A673 (cell line): ENCODE measurements at regions of chr11 and their contacts with region 1.

Region 1: DNA sequence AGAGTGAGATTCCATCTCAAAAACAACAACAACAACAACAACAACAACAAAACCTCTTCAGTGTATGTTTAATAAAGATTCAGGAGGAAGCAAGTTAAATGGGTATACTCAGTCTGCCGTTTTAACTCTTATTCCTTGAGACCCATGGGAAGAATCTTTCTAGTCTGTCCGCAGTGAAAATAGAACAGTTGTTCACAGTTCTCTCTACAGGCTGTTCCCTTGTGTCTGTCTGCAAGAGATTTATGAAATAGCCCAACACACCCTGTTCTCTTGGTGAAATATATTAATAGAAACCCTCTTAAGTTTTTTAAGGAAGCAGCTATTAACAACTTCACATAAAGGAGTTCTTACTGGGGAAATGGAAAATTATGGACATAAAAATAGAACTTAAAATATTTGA is 682.2 kb upstream of the RAG2 start:
- DNase-seq: peak; percentile 45
- H3K4me3 ChIP-seq: no peak overlapping the region
- H3K27ac ChIP-seq: peak overlapping the region; percentile 100
- H3K4me1 ChIP-seq: peaks cover 61% of the 10 kb centered on the region
- H3K27me3 ChIP-seq: no peaks in the 10 kb centered on the region
- CTCF ChIP-seq: no peak

Region 2: DNA sequence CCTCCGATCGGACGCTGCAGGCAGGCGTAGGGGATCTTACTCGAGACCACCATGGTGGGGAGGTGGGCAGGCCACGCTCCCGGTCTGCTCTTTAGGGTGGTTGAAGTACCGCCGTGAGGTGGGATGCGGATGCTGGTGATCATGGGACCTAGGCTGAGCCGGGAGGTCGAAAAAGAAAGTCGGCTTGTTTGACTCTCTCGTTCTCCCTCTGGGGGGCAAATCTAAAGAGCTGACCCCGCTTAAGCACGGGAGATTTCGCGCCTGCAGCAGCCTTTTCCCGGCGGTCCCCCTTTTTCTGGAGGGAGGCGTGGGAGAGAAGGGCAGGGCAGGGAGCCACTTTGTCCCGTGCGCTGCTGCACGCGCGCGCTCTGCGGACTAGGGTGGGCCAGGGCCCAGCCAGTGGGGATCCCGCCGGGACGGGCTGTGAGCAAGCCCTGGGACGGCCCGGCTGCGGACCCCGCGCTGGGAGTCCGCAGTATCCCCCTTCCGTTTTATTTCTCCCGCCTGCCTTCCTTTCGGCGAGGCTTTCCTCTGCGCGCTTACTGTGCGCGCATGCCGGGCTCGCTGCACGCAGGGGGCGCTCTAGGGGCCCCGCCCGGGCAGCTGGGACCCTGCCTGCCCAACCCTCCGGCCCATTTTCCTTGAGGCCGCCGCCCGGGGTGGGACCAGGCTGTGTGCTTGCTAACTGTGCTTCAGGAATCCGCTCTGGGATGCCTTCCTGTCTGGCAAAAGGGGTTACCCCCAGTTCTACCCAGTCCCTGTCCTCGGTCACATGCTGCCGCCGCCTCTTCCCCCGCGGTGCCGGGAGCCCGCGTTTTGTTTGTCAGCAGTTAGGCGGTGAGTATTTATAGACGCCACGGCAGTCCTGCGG is 903.1 kb before region 1 on chr11:
- CTCF ChIA-PET with region 1: no interaction called
- POLR2A ChIA-PET with region 1: no interaction called
- intact Hi-C with region 1: loop called (anchors 2 kb)
- DNase-seq: peak; percentile 91
- H3K4me3 ChIP-seq: peak overlapping the region; percentile 57
- H3K27ac ChIP-seq: peak overlapping the region; percentile 47
- H3K4me1 ChIP-seq: peaks cover 72% of the 10 kb centered on the region
- H3K27me3 ChIP-seq: no peaks in the 10 kb centered on the region
- CTCF ChIP-seq: peak; percentile 99

Region 3: DNA sequence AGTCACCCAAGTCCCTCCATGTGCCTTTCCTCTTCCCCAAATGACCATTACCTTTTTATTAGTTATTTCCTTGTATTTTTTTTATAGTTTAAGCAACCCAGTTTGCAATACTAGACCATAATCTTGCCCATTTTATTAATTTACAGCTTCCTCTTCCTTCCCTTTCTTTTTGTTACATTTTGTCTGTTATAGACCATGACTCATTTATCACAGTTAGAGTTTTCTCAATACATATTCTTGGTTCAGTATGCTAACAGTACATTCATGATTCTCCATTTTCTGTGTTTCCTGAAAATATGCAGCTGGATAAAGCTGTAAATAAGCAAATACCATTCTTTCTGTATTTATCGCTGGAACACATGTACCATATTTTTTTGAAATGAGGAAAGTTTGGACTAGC is 305.4 kb before region 1 on chr11:
- CTCF ChIA-PET with region 1: no interaction called
- POLR2A ChIA-PET with region 1: no interaction called
- intact Hi-C with region 1: loop called (anchors 1 kb)
- DNase-seq: peak; percentile 93
- H3K4me3 ChIP-seq: no peak overlapping the region
- H3K27ac ChIP-seq: peak overlapping the region; percentile 35
- H3K4me1 ChIP-seq: peaks cover 31% of the 10 kb centered on the region
- H3K27me3 ChIP-seq: no peaks in the 10 kb centered on the region
- CTCF ChIP-seq: no peak

Region 4: GRCh38 chr11:37104380-37104779 is 175.8 kb before region 1 on chr11:
- CTCF ChIA-PET with region 1: no interaction called
- POLR2A ChIA-PET with region 1: no interaction called
- intact Hi-C with region 1: loop called (anchors 1 kb)
- DNase-seq: no peak
- H3K4me3 ChIP-seq: no peak overlapping the region
- H3K27ac ChIP-seq: no peak overlapping the region
- H3K4me1 ChIP-seq: peaks cover 32% of the 10 kb centered on the region
- H3K27me3 ChIP-seq: no peaks in the 10 kb centered on the region
- CTCF ChIP-seq: no peak

Region 5: GRCh38 chr11:37595845-37596244 is 315.6 kb after region 1 on chr11:
- CTCF ChIA-PET with region 1: no interaction called
- POLR2A ChIA-PET with region 1: no interaction called
- intact Hi-C with region 1: loop called (anchors 5 kb)
- DNase-seq: no peak
- H3K4me3 ChIP-seq: no peak overlapping the region
- H3K27ac ChIP-seq: no peak overlapping the region
- H3K4me1 ChIP-seq: peaks cover 20% of the 10 kb centered on the region
- H3K27me3 ChIP-seq: no peaks in the 10 kb centered on the region
- CTCF ChIP-seq: no peak

Region 6: DNA sequence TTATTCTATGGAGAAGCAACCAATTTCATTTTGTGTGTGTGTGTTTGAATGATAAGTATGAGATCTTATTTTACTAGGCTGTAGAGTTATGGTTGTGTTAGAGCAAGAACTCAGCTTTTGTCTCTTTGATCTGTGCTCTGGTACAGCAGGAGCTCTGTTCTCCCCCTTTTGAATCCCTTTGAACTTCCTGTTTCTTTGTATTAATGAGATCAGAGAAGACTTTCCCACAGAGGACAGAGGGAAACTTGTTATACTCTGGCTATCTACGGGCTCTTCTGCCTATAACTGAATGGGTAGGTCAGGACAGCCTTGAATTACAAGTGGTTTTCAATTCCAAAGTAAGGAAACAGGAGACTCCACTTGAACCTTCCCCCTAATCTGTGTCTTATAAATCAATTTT is 332.8 kb after region 1 on chr11:
- CTCF ChIA-PET with region 1: no interaction called
- POLR2A ChIA-PET with region 1: no interaction called
- intact Hi-C with region 1: no loop called
- DNase-seq: peak; percentile 60
- H3K4me3 ChIP-seq: no peak overlapping the region
- H3K27ac ChIP-seq: no peak overlapping the region
- H3K4me1 ChIP-seq: no peaks in the 10 kb centered on the region
- H3K27me3 ChIP-seq: no peaks in the 10 kb centered on the region
- CTCF ChIP-seq: no peak; the same call in 1 of the 2 replicates

Region 7: DNA sequence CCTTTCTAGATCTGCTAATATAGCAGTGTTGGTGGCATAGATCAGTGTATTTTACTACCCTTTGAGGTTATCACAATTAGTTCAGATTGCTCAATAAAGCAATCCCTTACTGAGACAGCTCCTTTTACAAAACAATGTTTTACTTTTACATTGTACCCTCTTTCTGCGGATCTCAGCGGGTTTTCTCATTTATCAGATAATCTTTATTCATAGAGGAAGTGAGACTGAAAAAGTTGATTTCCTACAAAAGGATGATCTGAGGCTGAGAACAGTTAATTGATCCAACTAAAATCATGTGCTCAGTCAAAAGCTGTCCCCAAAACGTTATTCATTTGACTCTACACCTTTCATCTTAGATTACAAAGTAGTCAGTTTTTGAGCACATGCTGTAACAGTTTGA is 1859.4 kb after region 1 on chr11:
- CTCF ChIA-PET with region 1: no interaction called
- POLR2A ChIA-PET with region 1: no interaction called
- intact Hi-C with region 1: loop called (anchors 1 kb)
- DNase-seq: peak; percentile 99
- H3K4me3 ChIP-seq: no peak overlapping the region
- H3K27ac ChIP-seq: peak overlapping the region; percentile 61
- H3K4me1 ChIP-seq: peaks cover 36% of the 10 kb centered on the region
- H3K27me3 ChIP-seq: no peaks in the 10 kb centered on the region
- CTCF ChIP-seq: no peak